Natural killer cell (primary cell): ENCODE measurements at regions of chr11 and their contacts with region 1.

Region 1: GRCh38 chr11:9506489-9507276 is 45.9 kb downstream of the ZNF143 start:
- DNase-seq: peak; percentile 62 to 87
- ATAC-seq: peak; percentile 62 to 75 (median 73)
- H3K4me3 ChIP-seq: no peak overlapping the region
- H3K4me3 Mint-ChIP-seq: no peak overlapping the region
- H3K27ac ChIP-seq: no peak overlapping the region
- H3K27ac Mint-ChIP-seq: no peak overlapping the region
- H3K4me1 ChIP-seq: peaks cover 7% of the 10 kb centered on the region
- H3K4me1 Mint-ChIP-seq: peaks cover 18 to 22% of the 10 kb centered on the region in 2 donors
- H3K27me3 ChIP-seq: no peaks in the 10 kb centered on the region
- H3K27me3 Mint-ChIP-seq: no peaks in the 10 kb centered on the region
- CTCF ChIP-seq: peak; percentile 93

Region 2: DNA sequence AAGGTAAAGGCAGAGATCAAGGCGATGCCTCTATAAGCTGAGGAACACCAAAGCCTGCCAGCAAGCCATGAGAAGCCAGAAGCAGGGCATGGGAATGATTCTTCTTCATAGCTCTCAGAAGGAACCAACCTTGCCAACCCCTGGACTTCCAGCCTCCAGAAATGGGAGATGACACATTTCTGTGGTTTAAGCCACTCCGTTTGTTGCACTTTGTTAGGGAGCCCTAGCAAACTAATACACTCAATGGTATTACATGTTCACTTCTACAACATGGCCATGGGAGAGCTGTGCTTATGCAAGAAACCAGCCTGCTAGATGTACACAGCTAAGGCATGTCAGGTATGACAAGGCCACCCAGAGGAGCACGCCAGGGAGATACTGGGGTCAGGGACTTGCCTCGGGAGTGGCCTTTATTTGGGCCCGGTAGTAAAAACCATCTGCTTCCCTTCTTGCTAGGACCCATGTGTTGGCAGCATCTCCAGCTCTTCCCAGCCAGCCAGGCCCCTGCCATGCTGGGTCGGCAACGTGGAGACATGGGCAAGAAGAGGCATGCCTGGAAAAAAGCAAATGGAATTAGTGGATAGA is 577.6 kb before region 1 on chr11:
- intact Hi-C with region 1: no loop called
- DNase-seq: no peak
- ATAC-seq: no peak
- H3K4me3 ChIP-seq: no peak overlapping the region
- H3K4me3 Mint-ChIP-seq: no peak overlapping the region
- H3K27ac ChIP-seq: no peak overlapping the region
- H3K27ac Mint-ChIP-seq: no peak overlapping the region
- H3K4me1 ChIP-seq: no peaks in the 10 kb centered on the region
- H3K4me1 Mint-ChIP-seq: no peaks in the 10 kb centered on the region
- H3K27me3 ChIP-seq: no peaks in the 10 kb centered on the region
- H3K27me3 Mint-ChIP-seq: peaks cover 0 to 2% of the 10 kb centered on the region in 2 donors
- CTCF ChIP-seq: no peak

Region 3: DNA sequence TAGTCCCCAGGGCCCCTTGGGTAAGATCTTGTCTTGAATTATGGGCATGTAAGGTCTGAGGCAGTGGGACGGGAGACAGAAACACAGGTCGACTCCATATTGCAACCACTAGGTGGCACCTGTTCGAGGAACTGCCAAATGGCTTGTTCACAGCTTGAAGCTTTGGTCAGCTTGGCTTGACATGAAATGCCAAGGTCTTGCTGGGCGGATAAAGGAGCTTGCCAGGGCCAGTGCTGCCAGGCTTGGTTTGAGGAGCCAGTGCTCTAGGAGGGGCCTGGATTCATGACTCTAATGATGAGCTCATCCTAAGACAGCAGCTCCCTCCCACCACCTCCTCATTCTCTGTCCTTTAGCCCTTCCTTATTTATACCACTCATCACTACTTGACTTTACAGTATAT is 491.0 kb before region 1 on chr11:
- intact Hi-C with region 1: loop called (anchors 1 kb)
- DNase-seq: peak; percentile 24 to 81
- ATAC-seq: peak; percentile 70 to 90 (median 87)
- H3K4me3 ChIP-seq: no peak overlapping the region
- H3K4me3 Mint-ChIP-seq: no peak overlapping the region
- H3K27ac ChIP-seq: no peak overlapping the region
- H3K27ac Mint-ChIP-seq: no peak overlapping the region
- H3K4me1 ChIP-seq: no peaks in the 10 kb centered on the region
- H3K4me1 Mint-ChIP-seq: no peaks in the 10 kb centered on the region
- H3K27me3 ChIP-seq: no peaks in the 10 kb centered on the region
- H3K27me3 Mint-ChIP-seq: peaks cover 12 to 24% of the 10 kb centered on the region in 2 donors
- CTCF ChIP-seq: peak; percentile 75

Region 4: GRCh38 chr11:9170450-9170849 is 336.2 kb before region 1 on chr11:
- intact Hi-C with region 1: loop called (anchors 1 kb)
- DNase-seq: no peak
- ATAC-seq: no peak
- H3K4me3 ChIP-seq: no peak overlapping the region
- H3K4me3 Mint-ChIP-seq: no peak overlapping the region
- H3K27ac ChIP-seq: no peak overlapping the region
- H3K27ac Mint-ChIP-seq: no peak overlapping the region
- H3K4me1 ChIP-seq: no peaks in the 10 kb centered on the region
- H3K4me1 Mint-ChIP-seq: peaks cover 0 to 6% of the 10 kb centered on the region in 2 donors
- H3K27me3 ChIP-seq: no peaks in the 10 kb centered on the region
- H3K27me3 Mint-ChIP-seq: no peaks in the 10 kb centered on the region
- CTCF ChIP-seq: no peak

Region 5: GRCh38 chr11:9396752-9397151 is 109.9 kb before region 1 on chr11:
- intact Hi-C with region 1: no loop called
- DNase-seq: no peak
- ATAC-seq: no peak
- H3K4me3 ChIP-seq: no peak overlapping the region
- H3K4me3 Mint-ChIP-seq: no peak overlapping the region
- H3K27ac ChIP-seq: no peak overlapping the region
- H3K27ac Mint-ChIP-seq: no peak overlapping the region
- H3K4me1 ChIP-seq: peaks cover 13% of the 10 kb centered on the region
- H3K4me1 Mint-ChIP-seq: peaks cover 46 to 49% of the 10 kb centered on the region in 2 donors
- H3K27me3 ChIP-seq: no peaks in the 10 kb centered on the region
- H3K27me3 Mint-ChIP-seq: no peaks in the 10 kb centered on the region
- CTCF ChIP-seq: no peak